Activated T-helper 1 cell treated with anti-CD3 and anti-CD28 coated beads, Interleukin-12 subunit alpha, Interleukin-12 subunit beta, Interleukin-2, Interleukin-4 antibody, amounts not matched to agents 30 ng/mL and 10 ng/mL and 1 ng/mL, durations not matched to agents 14 hours and 24 hours and 36 hours (primary cell): ENCODE measurements at regions of chr6 and their contacts with region 1.

Region 1: GRCh38 chr6:21438237-21438985 is 155.1 kb upstream of the SOX4 start:
- DNase-seq: peak; percentile 40
- H3K4me3 Mint-ChIP-seq: peak overlapping the region; percentile 72
- H3K27ac Mint-ChIP-seq: peak overlapping the region; percentile 86
- H3K4me1 Mint-ChIP-seq: peaks cover 20% of the 10 kb centered on the region
- H3K27me3 Mint-ChIP-seq: peaks cover 11% of the 10 kb centered on the region

Region 2: DNA sequence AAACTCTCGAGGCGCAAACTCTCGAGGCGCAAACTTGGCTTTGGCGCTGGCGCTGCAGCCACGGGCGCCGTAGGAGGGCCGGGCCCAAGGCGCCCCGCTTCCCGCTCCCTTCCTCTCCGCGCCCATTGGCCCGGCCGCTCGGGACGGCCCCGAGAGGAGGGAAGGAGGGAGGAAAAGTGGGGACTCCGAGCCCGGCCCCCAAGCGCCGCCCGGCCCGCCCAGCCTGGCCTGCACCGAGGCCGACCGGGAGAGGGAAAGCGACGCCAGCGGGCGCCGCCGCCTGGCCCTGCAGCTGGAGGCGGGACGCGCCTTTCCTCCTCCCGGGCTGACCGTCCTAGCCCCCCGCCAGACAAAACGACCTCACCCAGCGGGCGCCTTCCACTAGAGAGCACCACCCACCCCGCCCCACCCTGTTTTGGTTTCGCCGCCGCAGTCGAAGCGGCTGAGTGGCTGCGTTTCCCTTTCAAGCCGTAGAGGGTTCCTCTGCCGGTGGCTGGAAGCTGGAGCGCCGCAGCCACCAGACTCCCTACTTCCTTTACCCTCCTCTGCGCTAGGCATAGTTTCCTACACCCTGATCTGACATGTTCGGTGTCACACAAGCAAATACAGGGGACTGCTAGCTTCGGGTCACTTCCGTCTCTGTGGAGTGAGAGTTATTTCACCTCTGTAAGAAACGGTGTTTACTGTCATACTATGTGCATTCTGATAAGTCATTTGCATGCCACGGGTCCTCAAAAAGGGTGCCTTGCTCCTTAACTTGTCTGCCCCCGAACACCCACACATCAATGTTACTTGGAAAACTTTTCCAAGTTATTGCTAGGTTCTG is 1225.8 kb before region 1 on chr6 and contains the start of gene MBOAT1:
- intact Hi-C with region 1: loop called (anchors 2 kb)
- DNase-seq: peak; percentile 72
- H3K4me3 Mint-ChIP-seq: peak within 1 kb of the TSS; percentile 93
- H3K27ac Mint-ChIP-seq: peak within 1 kb of the TSS; percentile 95
- H3K4me1 Mint-ChIP-seq: peaks cover 48% of the 10 kb centered on the region
- H3K27me3 Mint-ChIP-seq: peaks cover 7% of the 10 kb centered on the region
- total RNA-seq, gene MBOAT1: 12.2 and 13.5 TPM in 2 replicates

Region 3: DNA sequence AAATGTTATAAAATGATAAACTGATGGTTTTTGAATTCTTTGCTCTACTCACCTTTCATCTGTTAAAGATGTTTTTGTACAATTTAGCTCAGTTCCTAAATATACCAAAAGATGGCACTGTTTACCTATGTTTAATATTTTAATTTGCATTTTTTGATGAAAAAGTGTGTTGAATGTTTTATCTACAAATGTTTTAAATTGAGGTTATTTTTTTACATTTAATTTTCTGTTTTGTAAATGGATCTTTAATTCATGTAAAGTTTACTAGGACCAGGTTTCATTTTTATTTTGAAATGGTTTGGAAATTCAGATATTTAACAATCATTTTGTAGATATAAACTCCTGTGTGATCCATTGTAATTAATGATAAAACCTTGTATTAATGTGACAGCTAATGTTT is 874.1 kb before region 1 on chr6:
- intact Hi-C with region 1: loop called (anchors 2 kb)
- DNase-seq: no peak
- H3K4me3 Mint-ChIP-seq: no peak overlapping the region
- H3K27ac Mint-ChIP-seq: no peak overlapping the region
- H3K4me1 Mint-ChIP-seq: peaks cover 23% of the 10 kb centered on the region
- H3K27me3 Mint-ChIP-seq: no peaks in the 10 kb centered on the region

Region 4: DNA sequence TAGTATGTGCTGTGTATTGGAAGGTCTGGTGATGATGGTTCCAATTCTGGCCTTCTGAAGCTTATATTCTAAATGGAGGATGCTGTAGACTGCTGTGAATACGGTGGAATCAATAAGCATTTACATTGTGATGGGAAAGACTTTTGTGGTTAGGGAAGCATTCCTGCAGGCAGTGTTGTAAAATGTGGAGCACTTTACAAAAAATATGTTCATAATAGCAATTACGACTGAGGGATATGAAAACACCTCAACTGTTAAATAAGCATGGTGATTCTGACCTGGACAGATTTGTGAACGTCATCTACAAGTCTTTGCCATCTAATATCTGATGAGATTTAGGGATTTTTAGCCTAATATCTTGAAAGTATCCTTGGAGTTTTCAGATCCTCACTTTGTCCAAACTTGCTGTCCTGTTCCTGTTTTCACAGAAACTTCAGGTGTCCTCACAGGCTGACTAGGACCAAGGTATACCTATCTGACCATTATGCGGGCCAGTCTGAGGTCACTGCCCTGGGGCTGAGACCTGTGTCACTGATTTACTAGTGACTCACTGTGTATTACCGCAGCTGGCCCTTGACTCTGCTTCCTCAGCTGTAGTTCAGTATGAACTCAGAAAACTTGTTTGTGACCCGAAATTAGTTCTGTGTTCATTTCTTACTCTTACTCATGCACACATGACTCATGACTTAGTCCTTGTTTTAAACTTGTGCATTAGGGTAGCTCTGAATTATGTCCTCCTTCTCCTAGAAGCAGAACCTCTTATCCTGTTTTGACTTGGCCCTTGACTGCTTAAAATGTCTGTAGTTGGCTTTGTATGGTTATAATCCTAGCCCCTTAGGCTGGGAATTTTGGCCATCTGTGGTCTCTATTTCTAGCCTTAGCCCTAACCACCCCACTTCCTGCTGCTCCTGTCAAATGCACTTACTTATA is 561.1 kb before region 1 on chr6:
- intact Hi-C with region 1: loop called (anchors 10 kb)
- DNase-seq: peak; percentile 2
- H3K4me3 Mint-ChIP-seq: no peak overlapping the region
- H3K27ac Mint-ChIP-seq: peak overlapping the region; percentile 79
- H3K4me1 Mint-ChIP-seq: peaks cover 15% of the 10 kb centered on the region
- H3K27me3 Mint-ChIP-seq: no peaks in the 10 kb centered on the region

Region 5: GRCh38 chr6:21180155-21180554 is 258.3 kb before region 1 on chr6:
- intact Hi-C with region 1: loop called (anchors 5 kb)
- DNase-seq: no peak
- H3K4me3 Mint-ChIP-seq: no peak overlapping the region
- H3K27ac Mint-ChIP-seq: no peak overlapping the region
- H3K4me1 Mint-ChIP-seq: no peaks in the 10 kb centered on the region
- H3K27me3 Mint-ChIP-seq: peaks cover 1% of the 10 kb centered on the region

Region 6: GRCh38 chr6:21593412-21593926 is 155.1 kb after region 1 on chr6 and contains the start of gene SOX4:
- intact Hi-C with region 1: loop called (anchors 1 kb)
- DNase-seq: peak; percentile 51
- H3K4me3 Mint-ChIP-seq: peak within 1 kb of the TSS; percentile 87
- H3K27ac Mint-ChIP-seq: peak within 1 kb of the TSS; percentile 89
- H3K4me1 Mint-ChIP-seq: peaks cover 29% of the 10 kb centered on the region
- H3K27me3 Mint-ChIP-seq: peaks cover 46% of the 10 kb centered on the region
- total RNA-seq, gene SOX4: 1.2 and 1.5 TPM in 2 replicates

Region 7: DNA sequence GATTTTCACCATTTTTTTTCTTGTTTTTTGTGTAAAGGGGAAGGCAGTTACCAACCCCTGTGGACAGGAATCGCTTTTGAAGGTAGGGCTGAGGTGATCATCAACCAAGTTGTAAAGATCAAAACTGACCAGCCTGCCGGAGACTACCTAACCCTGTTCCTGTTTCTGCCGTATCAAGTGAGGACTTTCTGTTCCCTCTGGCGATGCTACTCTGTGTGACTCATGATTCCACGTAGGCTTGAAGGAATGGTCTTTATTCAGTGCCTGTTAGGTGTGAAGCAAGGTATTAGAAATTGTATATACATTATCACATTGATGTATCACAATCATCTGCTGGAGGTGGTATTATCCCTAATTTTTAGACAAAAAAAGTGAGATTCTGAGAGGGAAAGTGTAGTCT is 316.5 kb after region 1 on chr6:
- intact Hi-C with region 1: no loop called
- DNase-seq: no peak
- H3K4me3 Mint-ChIP-seq: no peak overlapping the region
- H3K27ac Mint-ChIP-seq: no peak overlapping the region
- H3K4me1 Mint-ChIP-seq: peaks cover 8% of the 10 kb centered on the region
- H3K27me3 Mint-ChIP-seq: no peaks in the 10 kb centered on the region